ENCODE measurements at regions of chr6 and their contacts with region 1.

Region 1: GRCh38 chr6:36290661-36291620 is 21.1 kb downstream of the PNPLA1 start:
- DNase-seq: no peak
- H3K4me3 ChIP-seq: no peak overlapping the region
- H3K4me3 Mint-ChIP-seq: no peak overlapping the region
- H3K27ac ChIP-seq: no peak overlapping the region
- H3K27ac Mint-ChIP-seq: peak overlapping the region in 1 of 8 donors; percentile 5
- H3K4me1 ChIP-seq: peaks cover 10% of the 10 kb centered on the region
- H3K4me1 Mint-ChIP-seq: peaks cover 4 to 7% (median 7%) of the 10 kb centered on the region in 3 donors
- H3K27me3 ChIP-seq: peaks cover under 1% of the 10 kb centered on the region
- H3K27me3 Mint-ChIP-seq: peaks cover 17 to 24% of the 10 kb centered on the region in 2 donors

Region 2: GRCh38 chr6:36269824-36270705 is 20.9 kb before region 1 on chr6 and contains the start of gene PNPLA1:
- CTCF ChIA-PET with region 1: no interaction called
- POLR2A ChIA-PET with region 1: no interaction called
- DNase-seq: no peak
- H3K4me3 ChIP-seq: no peak within 1 kb of the TSS
- H3K4me3 Mint-ChIP-seq: no peak within 1 kb of the TSS
- H3K27ac ChIP-seq: no peak within 1 kb of the TSS
- H3K27ac Mint-ChIP-seq: peak within 1 kb of the TSS in 1 of 8 donors; percentile 78
- H3K4me1 ChIP-seq: no peaks in the 10 kb centered on the region
- H3K4me1 Mint-ChIP-seq: no peaks in the 10 kb centered on the region
- H3K27me3 ChIP-seq: peaks cover 7% of the 10 kb centered on the region
- H3K27me3 Mint-ChIP-seq: peaks cover 19 to 48% of the 10 kb centered on the region in 2 donors
- total RNA-seq, gene PNPLA1: not detected

Region 3: DNA sequence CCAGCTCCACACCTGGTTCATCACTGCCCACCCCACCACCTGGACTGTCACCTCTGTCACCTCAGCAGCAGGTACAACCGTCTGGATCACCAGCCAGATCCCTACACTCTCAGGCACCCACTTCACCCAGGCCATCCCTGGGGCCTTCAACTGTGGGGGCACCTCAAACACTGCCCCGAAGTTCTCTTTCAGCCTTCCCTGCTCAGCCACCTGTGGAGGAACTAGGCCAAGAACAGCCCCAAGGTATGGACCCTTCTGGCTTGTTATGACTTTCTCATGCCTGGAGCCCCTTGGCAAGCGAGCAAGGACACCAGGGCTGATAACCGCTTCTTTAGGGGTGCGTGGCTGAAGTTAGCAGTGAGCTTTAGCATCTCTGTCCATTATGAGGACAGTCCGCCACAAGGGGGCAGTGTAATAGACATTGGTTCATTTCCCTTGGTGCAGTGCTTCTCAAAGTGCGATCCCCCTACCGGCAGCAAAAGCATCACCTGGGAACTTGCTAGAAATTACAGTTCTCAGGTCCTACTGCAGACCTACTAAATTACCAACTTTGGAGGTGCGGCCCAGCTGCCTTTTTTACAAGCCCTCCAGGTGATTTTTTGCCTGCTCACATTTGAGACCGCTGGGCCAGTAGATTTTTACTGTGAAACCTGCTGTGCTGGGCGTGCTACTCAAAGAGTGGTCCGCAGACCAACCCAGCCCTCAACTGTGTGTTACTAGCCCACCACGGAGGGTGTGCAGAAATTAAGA is 11.5 kb after region 1 on chr6:
- CTCF ChIA-PET with region 1: interaction called, 19 read pairs
- POLR2A ChIA-PET with region 1: no interaction called
- DNase-seq: peak; percentile 82 to 93 (median 85)
- H3K4me3 ChIP-seq: no peak overlapping the region
- H3K4me3 Mint-ChIP-seq: no peak overlapping the region
- H3K27ac ChIP-seq: no peak overlapping the region
- H3K27ac Mint-ChIP-seq: peak overlapping the region in 2 of 8 donors; percentile 19 to 25
- H3K4me1 ChIP-seq: no peaks in the 10 kb centered on the region
- H3K4me1 Mint-ChIP-seq: peaks cover 5 to 7% (median 7%) of the 10 kb centered on the region in 3 donors
- H3K27me3 ChIP-seq: peaks cover 12% of the 10 kb centered on the region
- H3K27me3 Mint-ChIP-seq: peaks cover 13 to 32% of the 10 kb centered on the region in 2 donors

Measured in CD8-positive, alpha-beta memory T cell (primary cell).